ENCODE measurements at regions of chr11 and their contacts with region 1.

Region 1: GRCh38 chr11:19259487-19260345 is 19.0 kb upstream of the E2F8 start:
- DNase-seq: no peak
- ATAC-seq: peak; percentile 82
- H3K4me3 ChIP-seq: no peak overlapping the region
- H3K27ac ChIP-seq: no peak overlapping the region
- H3K4me1 ChIP-seq: no peaks in the 10 kb centered on the region
- H3K27me3 ChIP-seq: no peaks in the 10 kb centered on the region
- CTCF ChIP-seq: peak; percentile 97

Region 2: GRCh38 chr11:19060629-19061028 is 199.1 kb before region 1 on chr11 and contains the start of gene MRGPRX2:
- CTCF ChIA-PET with region 1: no interaction called
- POLR2A ChIA-PET with region 1: no interaction called
- in situ Hi-C with region 1: no loop called
- intact Hi-C with region 1: no loop called
- DNase-seq: no peak
- ATAC-seq: no peak
- H3K4me3 ChIP-seq: no peak within 1 kb of the TSS
- H3K27ac ChIP-seq: no peak within 1 kb of the TSS
- H3K4me1 ChIP-seq: no peaks in the 10 kb centered on the region
- H3K27me3 ChIP-seq: peaks cover 5% of the 10 kb centered on the region
- CTCF ChIP-seq: no peak
- total RNA-seq, gene MRGPRX2: not detected

Region 3: GRCh38 chr11:19071255-19071654 is 188.5 kb before region 1 on chr11:
- CTCF ChIA-PET with region 1: no interaction called
- POLR2A ChIA-PET with region 1: no interaction called
- in situ Hi-C with region 1: no loop called
- intact Hi-C with region 1: loop called (anchors 5 kb)
- DNase-seq: peak; percentile 73
- ATAC-seq: peak; percentile 95
- H3K4me3 ChIP-seq: peak overlapping the region; percentile 12 to 40; a peak in 3 of 4 replicates
- H3K27ac ChIP-seq: no peak overlapping the region
- H3K4me1 ChIP-seq: no peaks in the 10 kb centered on the region; the same call in 1 of the 2 replicates
- H3K27me3 ChIP-seq: no peaks in the 10 kb centered on the region; the same call in 1 of the 2 replicates
- CTCF ChIP-seq: peak; percentile 98

Region 4: GRCh38 chr11:20511982-20512381 is 1252.3 kb after region 1 on chr11:
- CTCF ChIA-PET with region 1: no interaction called
- POLR2A ChIA-PET with region 1: no interaction called
- in situ Hi-C with region 1: no loop called
- intact Hi-C with region 1: no loop called
- DNase-seq: no peak
- ATAC-seq: no peak
- H3K4me3 ChIP-seq: no peak overlapping the region
- H3K27ac ChIP-seq: no peak overlapping the region
- H3K4me1 ChIP-seq: no peaks in the 10 kb centered on the region
- H3K27me3 ChIP-seq: no peaks in the 10 kb centered on the region
- CTCF ChIP-seq: no peak

Measured in Panc1 (cell line).